CD4-positive, alpha-beta T cell (primary cell): ENCODE measurements at regions of chr16 and their contacts with region 1.

Region 1: DNA sequence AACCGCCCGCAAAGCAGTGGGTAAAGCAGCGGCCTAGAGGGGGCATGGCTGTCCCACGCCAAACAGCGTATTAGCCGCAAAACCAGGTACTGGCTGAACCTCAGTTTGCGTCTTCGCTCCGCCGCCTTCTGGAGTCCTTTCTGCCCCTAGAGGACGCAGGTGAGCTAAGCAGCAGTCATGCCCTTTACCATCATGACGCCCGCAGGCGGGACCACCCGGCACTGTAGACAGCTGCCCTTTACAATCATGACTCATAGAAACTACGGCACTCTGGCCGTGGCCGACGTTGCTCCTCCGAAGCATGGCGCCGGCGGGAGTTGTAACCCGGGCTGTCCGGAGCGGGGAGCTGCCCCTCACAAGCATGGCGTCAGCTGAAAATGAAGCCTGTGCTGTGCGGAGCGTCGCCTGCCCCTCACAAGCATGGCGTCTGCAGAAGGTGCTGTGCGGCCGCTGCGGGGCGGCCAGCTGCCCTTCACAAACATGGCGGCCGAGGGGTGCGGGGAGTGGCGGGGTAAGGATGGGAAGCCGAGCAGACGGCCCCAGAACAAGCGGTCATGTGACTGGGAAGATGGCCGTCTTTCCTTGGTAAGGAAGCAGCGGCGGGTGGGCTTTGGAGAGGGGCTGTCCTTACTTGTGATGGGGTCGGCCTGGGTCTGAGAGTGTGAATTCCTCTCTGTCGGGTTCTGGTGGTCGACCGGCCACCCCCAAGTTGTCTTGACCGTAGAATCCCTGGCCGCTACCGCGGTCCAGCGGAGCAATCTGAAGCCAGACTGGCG is at the start of gene VPS35L:
- DNase-seq: peak; percentile 89 to 99 (median 96)
- ATAC-seq: peak; percentile 96
- H3K4me3 ChIP-seq: peak within 1 kb of the TSS; percentile 88
- H3K4me3 Mint-ChIP-seq: peak within 1 kb of the TSS; percentile 93
- H3K27ac ChIP-seq: peak within 1 kb of the TSS; percentile 75 to 88
- H3K27ac Mint-ChIP-seq: peak within 1 kb of the TSS; percentile 89
- H3K4me1 ChIP-seq: peaks cover 22% of the 10 kb centered on the region
- H3K4me1 Mint-ChIP-seq: peaks cover 28% of the 10 kb centered on the region
- H3K27me3 ChIP-seq: no peaks in the 10 kb centered on the region
- H3K27me3 Mint-ChIP-seq: no peaks in the 10 kb centered on the region
- CTCF ChIP-seq: peak; percentile 76
- total RNA-seq, gene VPS35L: 25.8 to 28.3 TPM

Region 2: GRCh38 chr16:18801197-18801972 is 754.0 kb before region 1 on chr16 and contains the start of gene ARL6IP1:
- CTCF ChIA-PET with region 1: interaction called, 6 read pairs
- POLR2A ChIA-PET with region 1: interaction called, 12 read pairs
- intact Hi-C with region 1: loop called in 1 of 2 experiments (anchors 10 kb)
- DNase-seq: peak; percentile 98 to 100 (median 99)
- ATAC-seq: peak; percentile 93
- H3K4me3 ChIP-seq: peak within 1 kb of the TSS; percentile 98
- H3K4me3 Mint-ChIP-seq: peak within 1 kb of the TSS; percentile 96
- H3K27ac ChIP-seq: peak within 1 kb of the TSS; percentile 91
- H3K27ac Mint-ChIP-seq: peak within 1 kb of the TSS; percentile 88
- H3K4me1 ChIP-seq: peaks cover 44% of the 10 kb centered on the region
- H3K4me1 Mint-ChIP-seq: peaks cover 49% of the 10 kb centered on the region
- H3K27me3 ChIP-seq: no peaks in the 10 kb centered on the region
- H3K27me3 Mint-ChIP-seq: no peaks in the 10 kb centered on the region
- CTCF ChIP-seq: peak; percentile 84
- total RNA-seq, gene ARL6IP1: 109 to 111 TPM

Region 3: GRCh38 chr16:19316846-19317245 is 238.5 kb before region 1 on chr16:
- CTCF ChIA-PET with region 1: no interaction called
- POLR2A ChIA-PET with region 1: no interaction called
- intact Hi-C with region 1: no loop called
- DNase-seq: no peak
- ATAC-seq: no peak
- H3K4me3 ChIP-seq: no peak overlapping the region
- H3K4me3 Mint-ChIP-seq: no peak overlapping the region
- H3K27ac ChIP-seq: no peak overlapping the region
- H3K27ac Mint-ChIP-seq: no peak overlapping the region
- H3K4me1 ChIP-seq: no peaks in the 10 kb centered on the region
- H3K4me1 Mint-ChIP-seq: no peaks in the 10 kb centered on the region
- H3K27me3 ChIP-seq: peaks cover 0 to 2% of the 10 kb centered on the region in 2 experiments
- H3K27me3 Mint-ChIP-seq: no peaks in the 10 kb centered on the region
- CTCF ChIP-seq: no peak

Region 4: DNA sequence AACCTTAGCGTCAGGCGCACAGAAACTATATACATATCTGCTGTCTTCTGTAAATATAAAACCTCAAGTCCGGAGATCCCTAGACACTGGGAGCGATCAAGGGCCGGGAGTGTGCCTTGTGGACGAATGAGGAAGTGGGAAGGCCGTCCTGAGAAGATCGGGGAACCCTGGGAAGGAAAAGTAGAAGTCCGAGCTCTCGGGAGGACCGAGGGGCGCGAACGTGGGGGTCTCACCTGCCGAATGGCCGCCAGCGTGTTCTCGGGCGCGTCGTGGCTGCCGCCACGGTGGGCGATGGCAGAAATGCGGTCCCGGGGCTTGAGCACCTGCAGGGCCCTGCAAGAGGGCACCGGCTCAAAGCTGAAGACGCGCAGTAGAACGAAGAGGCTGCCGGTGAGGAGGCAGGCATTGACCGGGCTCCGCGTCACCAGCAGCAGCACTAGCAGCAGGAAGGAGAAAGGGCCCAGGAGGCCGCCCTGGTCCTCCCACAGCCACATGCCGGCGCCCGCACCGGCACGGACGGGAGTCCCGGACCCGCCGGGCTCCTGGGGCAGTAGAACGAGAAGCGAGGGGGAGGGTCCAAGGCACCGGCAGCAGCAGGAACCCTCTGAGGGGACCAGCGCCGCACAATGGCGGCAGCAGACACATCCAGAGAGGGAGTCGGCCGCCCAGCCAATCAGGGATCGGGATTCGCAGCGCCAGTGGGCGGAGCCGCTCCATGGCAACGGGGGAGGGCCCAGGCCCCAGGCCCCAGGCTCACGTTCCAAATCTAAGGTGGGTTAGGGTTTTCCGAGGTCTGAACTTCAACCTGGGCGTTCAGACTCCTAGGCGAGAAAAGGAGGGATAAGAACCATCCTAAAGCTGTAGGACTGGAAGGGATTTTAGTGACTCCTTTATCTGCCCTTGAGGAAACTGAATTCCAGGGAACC is 33.6 kb before region 1 on chr16 and contains the start of gene GDE1:
- CTCF ChIA-PET with region 1: interaction called, 40 read pairs
- POLR2A ChIA-PET with region 1: interaction called, 65 read pairs
- intact Hi-C with region 1: loop called (anchors 1 kb)
- DNase-seq: peak; percentile 85 to 97 (median 93)
- ATAC-seq: peak; percentile 76
- H3K4me3 ChIP-seq: peak within 1 kb of the TSS; percentile 93
- H3K4me3 Mint-ChIP-seq: peak within 1 kb of the TSS; percentile 99
- H3K27ac ChIP-seq: peak within 1 kb of the TSS; percentile 58 to 78
- H3K27ac Mint-ChIP-seq: peak within 1 kb of the TSS; percentile 84
- H3K4me1 ChIP-seq: peaks cover 55% of the 10 kb centered on the region
- H3K4me1 Mint-ChIP-seq: peaks cover 69% of the 10 kb centered on the region
- H3K27me3 ChIP-seq: no peaks in the 10 kb centered on the region
- H3K27me3 Mint-ChIP-seq: no peaks in the 10 kb centered on the region
- CTCF ChIP-seq: peak; percentile 27
- total RNA-seq, gene GDE1: 22.0 to 22.2 TPM

Region 5: DNA sequence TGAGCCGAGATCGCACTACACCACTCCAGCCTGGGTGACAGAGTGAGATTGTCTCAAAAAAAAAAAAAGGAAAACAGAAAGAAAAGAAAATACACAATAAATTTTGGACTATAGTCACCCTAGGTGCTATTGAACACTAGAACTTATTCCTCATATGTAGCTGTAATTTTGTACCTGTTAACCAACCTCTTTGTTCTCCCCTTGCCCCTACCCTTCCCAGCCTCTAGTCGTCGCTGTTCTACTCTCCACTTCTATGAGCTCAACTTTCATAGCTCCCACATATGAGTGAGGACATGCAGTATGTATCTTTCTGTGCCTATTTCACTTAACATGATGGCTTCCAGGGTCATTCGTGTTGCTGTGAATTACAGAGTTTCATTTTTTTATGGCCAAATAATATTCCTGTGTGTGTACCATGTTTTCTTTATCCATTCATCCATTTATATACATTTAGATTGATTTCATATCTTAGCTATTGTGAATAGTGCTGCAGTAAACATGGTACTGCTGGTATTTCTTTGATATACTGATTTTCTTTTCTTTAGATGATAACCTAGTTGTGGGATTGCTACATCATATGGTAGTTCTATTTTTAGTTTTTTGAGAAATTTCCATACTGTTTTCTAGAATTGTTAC is 28.4 kb after region 1 on chr16:
- CTCF ChIA-PET with region 1: interaction called, 10 read pairs
- POLR2A ChIA-PET with region 1: no interaction called
- intact Hi-C with region 1: no loop called
- DNase-seq: peak in 8 of 14 experiments; percentile 7 to 65 (median 26)
- ATAC-seq: peak; percentile 83
- H3K4me3 ChIP-seq: no peak overlapping the region
- H3K4me3 Mint-ChIP-seq: no peak overlapping the region
- H3K27ac ChIP-seq: no peak overlapping the region
- H3K27ac Mint-ChIP-seq: no peak overlapping the region
- H3K4me1 ChIP-seq: no peaks in the 10 kb centered on the region
- H3K4me1 Mint-ChIP-seq: no peaks in the 10 kb centered on the region
- H3K27me3 ChIP-seq: no peaks in the 10 kb centered on the region
- H3K27me3 Mint-ChIP-seq: no peaks in the 10 kb centered on the region
- CTCF ChIP-seq: peak; percentile 74

Region 6: GRCh38 chr16:19677402-19677801 is 122.1 kb after region 1 on chr16:
- CTCF ChIA-PET with region 1: no interaction called
- POLR2A ChIA-PET with region 1: no interaction called
- intact Hi-C with region 1: no loop called
- DNase-seq: no peak
- ATAC-seq: no peak
- H3K4me3 ChIP-seq: no peak overlapping the region
- H3K4me3 Mint-ChIP-seq: no peak overlapping the region
- H3K27ac ChIP-seq: no peak overlapping the region
- H3K27ac Mint-ChIP-seq: no peak overlapping the region
- H3K4me1 ChIP-seq: no peaks in the 10 kb centered on the region
- H3K4me1 Mint-ChIP-seq: no peaks in the 10 kb centered on the region
- H3K27me3 ChIP-seq: no peaks in the 10 kb centered on the region
- H3K27me3 Mint-ChIP-seq: no peaks in the 10 kb centered on the region
- CTCF ChIP-seq: no peak

Region 7: GRCh38 chr16:19886073-19886941 is 331.0 kb after region 1 on chr16:
- CTCF ChIA-PET with region 1: interaction called, 15 read pairs
- POLR2A ChIA-PET with region 1: interaction called, 10 read pairs
- intact Hi-C with region 1: loop called (anchors 1 kb)
- DNase-seq: peak; percentile 67 to 90 (median 79)
- ATAC-seq: peak; percentile 69
- H3K4me3 ChIP-seq: peak overlapping the region; percentile 69
- H3K4me3 Mint-ChIP-seq: peak overlapping the region; percentile 91
- H3K27ac ChIP-seq: no peak overlapping the region
- H3K27ac Mint-ChIP-seq: peak overlapping the region; percentile 22
- H3K4me1 ChIP-seq: peaks cover 34% of the 10 kb centered on the region
- H3K4me1 Mint-ChIP-seq: peaks cover 29% of the 10 kb centered on the region
- H3K27me3 ChIP-seq: peaks cover 32 to 35% of the 10 kb centered on the region in 2 experiments
- H3K27me3 Mint-ChIP-seq: peaks cover 33% of the 10 kb centered on the region
- CTCF ChIP-seq: peak; percentile 99

Region 8: GRCh38 chr16:21501909-21502667 is 1946.7 kb after region 1 on chr16:
- CTCF ChIA-PET with region 1: no interaction called
- POLR2A ChIA-PET with region 1: no interaction called
- intact Hi-C with region 1: loop called in 1 of 2 experiments (anchors 10 kb)
- DNase-seq: peak; percentile 78 to 96 (median 88)
- ATAC-seq: peak; percentile 82
- H3K4me3 ChIP-seq: peak overlapping the region; percentile 80
- H3K4me3 Mint-ChIP-seq: peak overlapping the region; percentile 92
- H3K27ac ChIP-seq: peak overlapping the region; percentile 95 to 98
- H3K27ac Mint-ChIP-seq: peak overlapping the region; percentile 90
- H3K4me1 ChIP-seq: peaks cover 32% of the 10 kb centered on the region
- H3K4me1 Mint-ChIP-seq: peaks cover 21% of the 10 kb centered on the region
- H3K27me3 ChIP-seq: no peaks in the 10 kb centered on the region
- H3K27me3 Mint-ChIP-seq: no peaks in the 10 kb centered on the region
- CTCF ChIP-seq: no peak